Activated B cell treated with CpG ODN at 0.5 μM for 24 hours (primary cell): ENCODE measurements at regions of chr1 and their contacts with region 1.

Region 1: DNA sequence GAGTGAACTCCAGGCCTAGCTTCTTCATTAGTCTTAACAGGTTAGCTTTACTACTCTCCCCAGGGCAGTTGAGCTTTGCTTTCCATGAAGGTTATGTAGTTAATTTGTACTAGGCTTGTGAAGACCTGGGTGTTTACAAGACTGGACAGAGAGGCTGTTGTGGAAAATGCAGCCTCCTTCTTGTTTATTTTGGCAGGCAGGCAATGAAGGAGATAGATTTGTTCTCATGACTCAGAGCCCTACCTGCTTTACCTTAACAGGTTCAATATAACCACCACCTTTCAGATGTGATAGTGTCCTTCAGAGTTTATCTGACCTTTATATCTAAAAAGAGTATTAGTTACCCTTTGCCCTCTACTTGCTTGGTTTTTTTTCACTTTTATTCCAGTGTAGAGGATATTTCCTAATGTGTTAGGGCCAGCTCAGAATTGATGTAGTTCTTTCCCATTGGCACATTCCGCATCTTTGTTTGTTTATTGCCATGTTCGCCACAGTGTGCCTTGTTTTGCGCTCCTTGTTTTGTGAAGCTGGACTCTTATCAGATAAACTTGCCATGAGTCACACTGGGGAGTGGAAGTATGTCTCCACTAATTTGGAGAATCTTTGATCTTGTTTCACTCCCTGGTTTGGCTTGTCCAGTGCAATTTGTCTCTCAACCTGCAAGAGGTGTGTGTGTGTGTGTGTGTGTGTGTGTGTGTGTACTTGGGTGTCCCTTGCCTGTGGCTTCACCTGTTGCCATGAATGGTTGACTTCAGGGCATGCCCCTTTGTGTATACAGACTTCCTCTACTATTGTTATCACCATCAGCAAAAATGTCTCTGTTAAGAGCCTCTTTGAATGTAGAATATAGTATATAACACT is 87.4 kb upstream of the MACF1 start:
- DNase-seq: no peak
- ATAC-seq: no peak
- H3K4me3 Mint-ChIP-seq: no peak overlapping the region
- H3K27ac Mint-ChIP-seq: no peak overlapping the region
- H3K4me1 Mint-ChIP-seq: no peaks in the 10 kb centered on the region
- H3K27me3 Mint-ChIP-seq: no peaks in the 10 kb centered on the region
- CTCF ChIP-seq: no peak

Region 2: DNA sequence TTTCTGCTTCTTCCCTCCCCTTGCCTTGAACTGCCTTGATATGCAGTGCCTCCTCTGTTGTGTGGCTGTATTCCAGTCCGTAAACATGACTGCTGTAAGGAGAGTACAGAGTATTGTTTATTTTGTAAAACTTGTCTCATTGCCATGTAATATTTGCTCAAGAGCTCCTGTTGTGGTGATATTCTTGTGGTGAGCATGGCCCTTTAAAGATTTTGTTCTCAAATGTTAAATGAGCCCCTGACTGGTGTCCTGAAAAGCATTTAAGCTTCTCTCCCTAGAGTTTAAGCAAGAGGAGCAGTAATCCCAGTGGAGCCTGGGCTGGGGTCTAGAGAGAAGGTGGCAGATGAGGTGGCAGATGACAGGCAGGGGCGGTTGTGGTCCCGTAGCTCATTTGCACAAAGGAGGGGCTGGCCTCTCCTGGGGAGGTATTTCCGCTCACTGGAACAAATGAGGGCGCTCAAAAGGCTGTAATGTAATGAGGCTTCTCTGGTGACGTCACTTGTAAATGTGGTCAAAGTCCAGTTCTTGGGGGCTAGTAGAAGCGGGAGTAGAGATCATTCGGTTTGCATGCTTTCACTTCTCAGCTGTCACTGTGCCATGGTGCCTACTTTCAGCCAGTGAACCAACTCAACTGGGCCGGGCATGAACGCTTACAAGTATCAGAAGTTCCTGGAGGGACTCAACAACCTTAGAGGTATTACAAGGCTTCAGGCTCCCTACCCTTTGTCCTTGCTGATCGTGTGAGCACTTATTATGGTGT is 41.4 kb after region 1 on chr1:
- CTCF ChIA-PET with region 1: no interaction called
- POLR2A ChIA-PET with region 1: no interaction called
- intact Hi-C with region 1: loop called (anchors 5 kb)
- DNase-seq: no peak
- ATAC-seq: no peak
- H3K4me3 Mint-ChIP-seq: no peak overlapping the region
- H3K27ac Mint-ChIP-seq: no peak overlapping the region
- H3K4me1 Mint-ChIP-seq: peaks cover 2% of the 10 kb centered on the region
- H3K27me3 Mint-ChIP-seq: no peaks in the 10 kb centered on the region
- CTCF ChIP-seq: no peak

Region 3: DNA sequence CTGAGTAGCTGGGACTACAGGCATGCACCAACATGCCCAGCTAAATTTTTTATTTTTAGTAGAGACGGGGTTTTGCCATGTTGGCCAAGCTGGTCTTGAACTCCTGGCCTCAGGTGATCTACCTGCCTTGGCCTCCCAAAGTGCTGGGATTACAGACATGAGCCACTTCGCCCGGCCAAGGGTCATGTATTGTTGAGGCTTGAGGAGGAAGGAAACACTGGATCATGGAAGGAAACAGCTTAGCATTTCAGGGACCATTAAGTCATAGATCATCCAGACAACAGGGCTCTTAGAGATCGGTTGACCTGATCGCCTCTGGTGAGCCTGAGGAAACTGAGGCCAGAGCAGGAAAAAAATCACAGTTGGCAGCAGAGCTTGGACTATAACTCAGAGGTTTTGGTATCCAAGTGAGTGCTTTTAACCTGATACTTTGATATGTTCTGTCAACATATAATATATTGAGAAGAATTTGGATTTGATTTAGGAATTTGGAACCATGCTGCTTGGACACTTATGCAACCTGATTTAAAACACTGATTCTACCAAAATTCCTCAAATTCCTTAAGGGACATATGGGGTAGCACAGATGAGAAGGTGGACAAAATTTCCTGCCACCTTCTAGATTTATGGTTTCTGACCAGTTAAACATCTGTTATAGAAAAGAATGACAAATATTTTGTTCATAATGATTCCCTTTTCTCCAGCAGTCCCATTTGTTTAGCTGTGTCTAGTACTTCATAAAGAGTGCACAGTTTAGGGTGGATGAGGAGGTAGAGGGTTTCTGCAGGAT is 361.2 kb after region 1 on chr1:
- CTCF ChIA-PET with region 1: no interaction called
- POLR2A ChIA-PET with region 1: no interaction called
- intact Hi-C with region 1: no loop called
- DNase-seq: no peak
- ATAC-seq: no peak
- H3K4me3 Mint-ChIP-seq: no peak overlapping the region
- H3K27ac Mint-ChIP-seq: no peak overlapping the region
- H3K4me1 Mint-ChIP-seq: no peaks in the 10 kb centered on the region
- H3K27me3 Mint-ChIP-seq: no peaks in the 10 kb centered on the region
- CTCF ChIP-seq: no peak